Activated T-helper 2 cell treated with anti-CD3 and anti-CD28 coated beads, Interferon-gamma antibody, Interleukin-2, Interleukin-4, amounts not matched to agents 10 μg/mL and 5 μg/mL and 100 μg/mL, durations not matched to agents 14 hours and 24 hours and 36 hours (primary cell): ENCODE measurements at regions of chr7 and their contacts with region 1.

Region 1: DNA sequence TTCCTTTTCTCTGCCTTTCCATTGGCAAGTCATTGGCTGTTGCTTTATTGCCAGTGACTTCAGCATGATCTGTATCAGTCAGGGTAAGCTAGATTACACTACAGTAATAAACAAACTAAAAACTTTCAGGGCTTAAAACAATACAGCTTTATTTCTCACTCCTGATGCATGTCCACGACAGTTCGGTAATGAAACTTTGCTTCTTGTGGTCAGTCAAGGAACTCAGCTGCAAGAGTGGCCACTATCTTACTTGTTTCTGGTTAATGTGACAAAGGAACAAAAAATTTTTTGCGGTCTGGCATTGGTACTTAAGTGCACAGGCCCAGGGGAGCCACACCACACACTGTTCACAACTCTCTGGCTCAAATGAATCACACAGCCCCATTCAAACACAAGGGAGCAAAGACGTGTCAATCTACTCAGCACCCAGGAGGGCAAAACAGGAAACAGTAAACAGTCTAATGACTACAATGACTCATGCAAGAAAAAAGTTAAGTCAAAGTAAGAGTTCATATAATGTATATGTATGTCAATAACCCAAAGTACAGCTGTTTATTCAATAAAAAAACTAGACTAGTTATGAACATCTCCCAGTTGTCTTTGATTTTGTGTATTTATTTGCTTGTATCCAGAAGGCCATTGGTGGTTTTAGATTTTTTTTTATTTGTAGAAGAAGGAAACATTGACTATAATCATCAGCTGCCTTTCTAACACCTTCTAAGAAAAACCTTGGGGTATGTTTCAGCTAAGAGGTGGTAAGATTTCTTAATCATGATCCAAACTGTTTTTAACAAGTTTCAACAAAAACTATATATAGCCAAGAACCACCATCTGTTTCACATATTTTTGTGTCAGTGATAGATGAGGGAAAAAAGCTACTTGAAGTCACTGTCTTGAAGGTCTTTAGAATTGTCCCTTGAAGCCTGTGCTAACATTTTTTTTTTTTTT is 134.4 kb upstream of the FAM3C start:
- DNase-seq: peak; percentile 62
- H3K4me3 Mint-ChIP-seq: peak overlapping the region; percentile 45
- H3K27ac Mint-ChIP-seq: peak overlapping the region; percentile 94
- H3K4me1 Mint-ChIP-seq: peaks cover 40% of the 10 kb centered on the region
- H3K27me3 Mint-ChIP-seq: no peaks in the 10 kb centered on the region

Region 2: GRCh38 chr7:120950539-120951308 is 579.8 kb before region 1 on chr7 and contains the start of gene ING3:
- intact Hi-C with region 1: loop called (anchors 5 kb)
- DNase-seq: peak; percentile 97
- H3K4me3 Mint-ChIP-seq: peak within 1 kb of the TSS; percentile 91
- H3K27ac Mint-ChIP-seq: peak within 1 kb of the TSS; percentile 97
- H3K4me1 Mint-ChIP-seq: peaks cover 24% of the 10 kb centered on the region
- H3K27me3 Mint-ChIP-seq: peaks cover 4% of the 10 kb centered on the region
- total RNA-seq, gene ING3: 22.6 and 22.9 TPM in 2 replicates

Region 3: DNA sequence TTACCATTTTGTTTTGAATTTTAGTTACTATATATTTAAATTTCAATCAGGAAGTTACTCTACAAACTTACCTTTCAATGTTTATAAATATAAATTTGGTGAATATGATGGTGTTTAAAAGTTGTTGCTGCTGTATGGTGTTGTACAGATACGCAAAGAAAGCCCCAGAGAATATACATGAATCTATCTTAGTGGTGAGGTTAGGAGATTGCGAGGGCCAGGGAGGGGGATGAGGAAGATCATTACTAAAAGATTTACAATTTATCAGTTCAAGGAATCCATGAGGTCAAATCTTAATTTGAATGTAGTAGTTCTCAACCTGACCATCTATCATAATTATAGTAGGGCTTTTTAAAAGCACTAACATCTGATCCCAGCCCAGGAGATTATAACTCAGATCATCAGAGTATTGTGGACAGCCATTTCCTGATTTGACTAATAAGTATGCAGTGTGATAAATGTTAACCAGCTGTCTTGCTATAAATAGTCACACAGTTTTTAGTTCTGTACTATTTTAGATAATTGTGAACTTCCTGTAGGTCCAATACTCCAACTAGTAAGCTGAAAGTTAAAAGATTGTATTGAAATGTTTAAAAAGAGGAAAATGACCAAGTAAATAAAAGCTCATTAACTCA is 158.0 kb before region 1 on chr7:
- intact Hi-C with region 1: loop called (anchors 1 kb)
- DNase-seq: no peak
- H3K4me3 Mint-ChIP-seq: peak overlapping the region; percentile 18
- H3K27ac Mint-ChIP-seq: peak overlapping the region; percentile 50
- H3K4me1 Mint-ChIP-seq: peaks cover 57% of the 10 kb centered on the region
- H3K27me3 Mint-ChIP-seq: no peaks in the 10 kb centered on the region

Region 4: DNA sequence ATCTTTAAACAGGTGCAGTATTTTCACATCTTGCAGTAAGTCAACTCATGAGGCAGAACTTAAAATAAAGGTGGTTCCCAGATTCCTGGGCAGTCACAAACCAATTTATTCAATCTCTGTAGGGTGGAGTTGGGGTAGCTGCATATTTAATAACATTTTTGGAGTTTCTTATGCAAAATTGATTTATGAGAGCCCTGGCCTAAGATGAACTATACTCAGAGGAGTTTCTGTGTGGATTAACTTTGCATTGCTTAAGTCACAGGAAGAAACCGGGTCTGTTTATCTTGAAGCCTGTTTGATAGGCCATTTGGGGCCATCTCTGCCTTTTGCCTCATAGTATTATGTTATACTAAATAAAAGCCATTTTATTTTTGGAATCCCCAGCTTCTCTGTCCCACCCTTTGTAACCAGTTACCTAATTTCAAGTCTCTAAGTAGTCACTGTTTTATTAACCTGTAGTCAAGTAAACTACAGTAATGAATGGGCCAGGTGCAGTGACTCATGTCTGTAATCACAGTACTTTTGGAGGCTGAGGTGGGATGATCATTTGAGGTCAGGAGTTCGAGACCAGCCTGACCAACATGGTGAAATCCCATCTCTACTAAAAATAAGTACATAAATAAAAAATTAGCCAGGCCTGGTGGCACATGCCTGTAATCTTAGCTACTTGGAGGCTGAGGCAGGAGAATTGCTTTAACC is 30.0 kb before region 1 on chr7:
- intact Hi-C with region 1: loop called (anchors 1 kb)
- DNase-seq: no peak
- H3K4me3 Mint-ChIP-seq: no peak overlapping the region
- H3K27ac Mint-ChIP-seq: peak overlapping the region; percentile 86
- H3K4me1 Mint-ChIP-seq: peaks cover 25% of the 10 kb centered on the region
- H3K27me3 Mint-ChIP-seq: no peaks in the 10 kb centered on the region

Region 5: DNA sequence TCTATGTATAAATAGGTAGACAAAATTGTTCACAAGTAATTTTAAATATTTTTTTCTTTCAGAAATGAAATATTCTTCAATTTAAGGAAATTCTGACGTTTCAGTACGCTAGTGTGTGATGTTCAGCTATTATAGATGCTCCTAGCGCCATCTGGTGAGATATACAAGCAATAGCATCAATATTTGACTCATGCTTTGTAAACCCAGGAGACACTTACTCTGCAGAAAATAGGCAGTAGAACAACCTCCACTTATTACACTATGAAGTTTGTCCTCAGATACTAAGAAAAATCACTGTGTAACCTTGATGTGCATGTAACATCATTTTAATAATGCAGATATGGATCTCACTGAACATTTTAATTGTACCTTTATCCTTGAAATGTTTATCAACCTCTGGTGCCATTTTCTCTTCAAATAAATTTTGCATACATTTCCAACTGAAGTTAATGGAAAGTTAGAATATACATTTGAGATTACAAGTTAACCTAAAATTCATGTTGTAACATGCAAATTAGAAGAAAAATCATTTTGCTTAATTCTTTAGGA is 17.1 kb after region 1 on chr7:
- intact Hi-C with region 1: loop called (anchors 1 kb)
- DNase-seq: no peak
- H3K4me3 Mint-ChIP-seq: no peak overlapping the region
- H3K27ac Mint-ChIP-seq: no peak overlapping the region
- H3K4me1 Mint-ChIP-seq: peaks cover 38% of the 10 kb centered on the region
- H3K27me3 Mint-ChIP-seq: peaks cover 4% of the 10 kb centered on the region

Region 6: DNA sequence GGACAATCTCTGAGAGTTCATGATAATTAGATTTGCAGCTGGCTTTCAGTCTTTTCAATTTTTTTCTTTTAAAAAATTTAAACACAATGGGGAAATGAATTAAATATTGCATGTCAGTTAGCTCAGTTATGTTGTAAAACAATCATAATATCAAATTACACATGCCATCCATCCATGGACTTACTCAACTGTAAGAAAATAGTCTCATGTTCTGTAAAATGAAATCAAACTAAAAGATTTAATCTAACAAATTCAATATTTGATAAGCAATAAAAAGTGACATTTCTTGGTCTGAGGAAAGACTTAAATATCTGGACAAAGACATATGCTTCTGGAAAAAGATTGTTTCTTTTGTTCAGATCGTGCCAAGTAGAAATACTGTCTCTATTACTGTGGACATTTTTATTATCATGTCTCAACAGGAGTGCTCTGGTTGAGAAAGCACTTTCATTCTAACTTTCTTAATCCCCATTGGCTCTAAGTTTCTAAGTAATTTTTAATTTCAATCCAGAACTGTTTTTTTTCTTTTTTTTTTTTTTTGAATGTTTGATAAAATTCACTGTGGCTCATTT is 44.8 kb after region 1 on chr7:
- intact Hi-C with region 1: no loop called
- DNase-seq: no peak
- H3K4me3 Mint-ChIP-seq: no peak overlapping the region
- H3K27ac Mint-ChIP-seq: no peak overlapping the region
- H3K4me1 Mint-ChIP-seq: no peaks in the 10 kb centered on the region
- H3K27me3 Mint-ChIP-seq: peaks cover 21% of the 10 kb centered on the region